Activated T-helper 2 cell treated with anti-CD3 and anti-CD28 coated beads, Interferon-gamma antibody, Interleukin-2, Interleukin-4, amounts not matched to agents 10 μg/mL and 5 μg/mL and 100 μg/mL, durations not matched to agents 14 hours and 24 hours and 36 hours (primary cell): ENCODE measurements at regions of chr12 and their contacts with region 1.

Region 1: DNA sequence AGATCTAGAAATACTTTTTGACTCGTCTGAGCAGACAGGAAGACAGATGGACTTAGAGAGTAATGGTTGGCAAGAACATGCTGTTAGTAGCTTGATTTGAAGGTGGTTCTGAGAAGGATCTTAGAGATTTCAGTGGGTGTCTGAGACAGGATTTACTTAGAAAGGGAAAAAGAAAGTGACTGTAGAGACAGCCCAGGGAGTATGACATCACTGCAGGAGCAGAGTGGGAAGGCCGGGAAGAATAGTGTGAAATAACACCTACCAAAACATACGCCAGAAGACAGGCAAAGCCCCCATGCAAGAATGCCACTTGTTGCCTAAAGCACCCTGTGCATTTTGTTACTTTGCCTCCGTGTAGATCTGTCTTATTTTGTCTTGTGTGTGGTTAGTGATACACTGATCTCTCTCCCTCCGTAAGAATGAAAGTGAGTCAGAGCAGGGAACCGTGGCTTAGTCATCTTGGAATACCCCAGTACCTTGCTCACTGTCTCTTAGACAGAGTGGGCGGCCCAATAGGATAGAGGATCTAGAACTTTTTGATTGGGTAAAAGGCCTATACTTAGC is 161.3 kb upstream of the IFNG-AS1 start:
- DNase-seq: peak; percentile 11
- H3K4me3 Mint-ChIP-seq: peak overlapping the region; percentile 50
- H3K27ac Mint-ChIP-seq: peak overlapping the region; percentile 81
- H3K4me1 Mint-ChIP-seq: peaks cover 13% of the 10 kb centered on the region
- H3K27me3 Mint-ChIP-seq: no peaks in the 10 kb centered on the region

Region 2: GRCh38 chr12:67355578-67356379 is 472.1 kb before region 1 on chr12:
- intact Hi-C with region 1: loop called (anchors 2 kb)
- DNase-seq: no peak
- H3K4me3 Mint-ChIP-seq: no peak overlapping the region
- H3K27ac Mint-ChIP-seq: no peak overlapping the region
- H3K4me1 Mint-ChIP-seq: peaks cover 24% of the 10 kb centered on the region
- H3K27me3 Mint-ChIP-seq: peaks cover 6% of the 10 kb centered on the region

Region 3: GRCh38 chr12:67794161-67794560 is 33.7 kb before region 1 on chr12:
- intact Hi-C with region 1: no loop called
- DNase-seq: no peak
- H3K4me3 Mint-ChIP-seq: no peak overlapping the region
- H3K27ac Mint-ChIP-seq: no peak overlapping the region
- H3K4me1 Mint-ChIP-seq: peaks cover 8% of the 10 kb centered on the region
- H3K27me3 Mint-ChIP-seq: no peaks in the 10 kb centered on the region

Region 4: GRCh38 chr12:68290126-68290525 is 462.2 kb after region 1 on chr12:
- intact Hi-C with region 1: loop called (anchors 10 kb)
- DNase-seq: peak; percentile 36
- H3K4me3 Mint-ChIP-seq: no peak overlapping the region
- H3K27ac Mint-ChIP-seq: no peak overlapping the region
- H3K4me1 Mint-ChIP-seq: peaks cover 35% of the 10 kb centered on the region
- H3K27me3 Mint-ChIP-seq: peaks cover 28% of the 10 kb centered on the region